ENCODE measurements at regions of chr1 and their contacts with region 1.

Region 1: DNA sequence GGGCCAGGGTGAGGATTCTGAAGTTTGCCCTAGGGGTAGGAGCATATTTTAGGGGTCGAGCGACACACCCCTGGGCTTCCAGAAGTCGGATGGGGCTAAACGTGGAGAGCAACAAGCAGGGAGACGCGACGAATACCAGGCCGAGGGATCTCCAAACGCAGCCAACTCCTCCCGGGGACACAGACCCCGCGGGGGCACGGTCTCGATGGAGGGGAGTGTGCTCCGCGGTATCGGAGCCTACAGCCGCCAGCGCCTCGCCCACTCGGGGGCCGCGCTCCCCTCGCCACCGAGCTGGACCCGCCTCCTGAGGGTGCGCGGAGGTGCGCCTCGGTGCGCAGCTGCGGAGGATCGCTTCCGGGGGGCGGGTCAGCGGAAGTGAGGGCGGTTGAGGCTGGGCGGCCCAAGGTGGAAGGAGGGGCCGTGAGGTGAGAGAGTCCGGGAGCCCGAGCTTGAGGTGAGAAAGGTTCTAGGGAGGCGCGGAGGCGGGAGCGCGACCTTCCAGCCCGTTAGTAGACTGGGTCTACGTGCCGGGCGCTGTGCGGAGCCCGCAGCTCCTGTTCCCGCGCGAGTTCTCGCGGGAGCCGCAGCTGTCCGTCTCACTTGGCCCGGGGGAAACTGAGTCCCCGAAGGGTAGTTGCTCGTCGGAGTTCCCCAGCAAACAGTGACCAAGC is at the start of gene MTFR1L:
- DNase-seq: peak; percentile 89
- ATAC-seq: peak; percentile 89 to 94 (median 93)
- H3K4me3 ChIP-seq: peak within 1 kb of the TSS; percentile 71 to 100 (median 96)
- H3K27ac ChIP-seq: peak within 1 kb of the TSS; percentile 84 to 98 (median 97)
- H3K4me1 ChIP-seq: peaks cover 12 to 56% (median 43%) of the 10 kb centered on the region in 9 donors
- H3K27me3 ChIP-seq: no peaks in the 10 kb centered on the region
- CTCF ChIP-seq: no peak
- total RNA-seq, gene MTFR1L: 141 to 264 (median 226) TPM

Region 2: GRCh38 chr1:25239681-25240541 is 579.8 kb before region 1 on chr1:
- intact Hi-C with region 1: loop called in 4 of 10 experiments (anchors 5 to 10 kb)
- DNase-seq: peak; percentile 89 to 92
- ATAC-seq: peak; percentile 90 to 96 (median 95)
- H3K4me3 ChIP-seq: peak overlapping the region; percentile 20 to 61 (median 48)
- H3K27ac ChIP-seq: peak overlapping the region; percentile 80 to 94 (median 88)
- H3K4me1 ChIP-seq: peaks cover 7 to 78% (median 61%) of the 10 kb centered on the region in 9 donors
- H3K27me3 ChIP-seq: no peaks in the 10 kb centered on the region
- CTCF ChIP-seq: peak; percentile 47 to 79 (median 63)

Region 3: DNA sequence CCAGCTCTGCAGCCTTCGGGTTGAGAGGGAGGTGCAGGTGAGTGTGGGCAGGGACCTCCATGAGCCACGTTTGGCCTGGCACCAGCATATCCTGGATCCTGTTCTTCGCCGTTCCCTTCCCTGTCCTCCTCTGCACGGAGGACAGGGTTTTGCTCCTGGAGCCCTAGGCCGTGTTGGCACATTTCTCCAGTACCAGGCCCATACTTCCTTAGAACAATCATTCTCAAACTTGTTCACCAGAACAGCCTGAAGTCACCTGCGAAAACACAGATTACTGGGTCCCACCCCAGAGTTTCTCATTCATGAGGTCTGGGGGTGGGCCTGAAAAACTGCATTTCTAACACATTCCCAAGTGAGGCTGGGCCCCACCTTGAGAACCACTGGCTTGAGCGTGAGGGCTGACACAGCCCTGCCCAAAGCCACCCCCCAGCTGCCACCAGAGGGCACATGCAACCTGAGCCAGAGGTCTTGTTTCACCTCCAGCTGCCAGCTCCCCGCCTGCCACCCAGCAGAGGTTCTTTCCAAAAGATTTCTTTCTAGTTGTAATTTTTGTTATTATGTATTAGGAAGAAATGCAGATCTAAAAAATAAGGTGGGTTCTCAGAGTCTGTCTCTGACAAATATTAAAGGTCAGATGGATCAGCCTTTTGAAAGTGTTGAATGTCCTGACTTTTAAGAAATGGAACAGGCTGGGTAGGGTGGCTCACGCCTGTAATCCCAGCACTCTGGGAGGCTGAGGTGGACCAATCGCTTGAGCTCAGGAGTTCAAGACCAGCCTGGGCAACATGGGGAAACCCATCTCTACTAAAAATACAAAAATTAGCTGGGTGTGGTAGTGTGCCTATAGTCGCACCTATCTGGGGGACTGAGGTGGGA is 315.9 kb before region 1 on chr1:
- intact Hi-C with region 1: loop called in 2 of 10 experiments (anchors 5 to 10 kb)
- DNase-seq: peak; percentile 53 to 58
- ATAC-seq: peak in 7 of 8 donors; percentile 60 to 87 (median 84)
- H3K4me3 ChIP-seq: no peak overlapping the region
- H3K27ac ChIP-seq: no peak overlapping the region
- H3K4me1 ChIP-seq: peaks cover 0 to 35% (median 7%) of the 10 kb centered on the region in 9 donors
- H3K27me3 ChIP-seq: no peaks in the 10 kb centered on the region
- CTCF ChIP-seq: peak; percentile 26 to 68 (median 54)

Region 4: GRCh38 chr1:25520446-25521061 is 299.2 kb before region 1 on chr1:
- intact Hi-C with region 1: loop called in 1 of 10 experiments (anchors 10 kb)
- DNase-seq: peak; percentile 44 to 62
- ATAC-seq: peak in 2 of 8 donors; percentile 37 to 51
- H3K4me3 ChIP-seq: no peak overlapping the region
- H3K27ac ChIP-seq: no peak overlapping the region
- H3K4me1 ChIP-seq: peaks cover 0 to 6% (median 0%) of the 10 kb centered on the region in 9 donors
- H3K27me3 ChIP-seq: peaks cover 0 to 3% (median 0%) of the 10 kb centered on the region in 7 donors
- CTCF ChIP-seq: peak; percentile 66 to 90 (median 84)

Region 5: GRCh38 chr1:25997828-25998761 is 178.4 kb after region 1 on chr1 and contains the start of gene PAFAH2:
- intact Hi-C with region 1: loop called in 1 of 10 experiments (anchors 2 kb)
- DNase-seq: peak; percentile 96 to 99
- ATAC-seq: peak; percentile 99 to 100 (median 100)
- H3K4me3 ChIP-seq: peak within 1 kb of the TSS; percentile 34 to 88 (median 65)
- H3K27ac ChIP-seq: peak within 1 kb of the TSS; percentile 19 to 89 (median 86)
- H3K4me1 ChIP-seq: peaks cover 4 to 31% (median 19%) of the 10 kb centered on the region in 9 donors
- H3K27me3 ChIP-seq: no peaks in the 10 kb centered on the region
- CTCF ChIP-seq: peak; percentile 93 to 99 (median 98)
- total RNA-seq, gene PAFAH2: 7.5 to 19.3 (median 12.4) TPM